ENCODE measurements at regions of chr2 and their contacts with region 1.

Region 1: GRCh38 chr2:235098736-235099494 is 147.1 kb downstream of the SH3BP4 start:
- DNase-seq: no peak
- ATAC-seq: peak; percentile 84
- H3K4me3 ChIP-seq: no peak overlapping the region
- H3K27ac ChIP-seq: peak overlapping the region; percentile 60
- H3K4me1 ChIP-seq: peaks cover 20% of the 10 kb centered on the region
- H3K27me3 ChIP-seq: no peaks in the 10 kb centered on the region
- CTCF ChIP-seq: no peak

Region 2: DNA sequence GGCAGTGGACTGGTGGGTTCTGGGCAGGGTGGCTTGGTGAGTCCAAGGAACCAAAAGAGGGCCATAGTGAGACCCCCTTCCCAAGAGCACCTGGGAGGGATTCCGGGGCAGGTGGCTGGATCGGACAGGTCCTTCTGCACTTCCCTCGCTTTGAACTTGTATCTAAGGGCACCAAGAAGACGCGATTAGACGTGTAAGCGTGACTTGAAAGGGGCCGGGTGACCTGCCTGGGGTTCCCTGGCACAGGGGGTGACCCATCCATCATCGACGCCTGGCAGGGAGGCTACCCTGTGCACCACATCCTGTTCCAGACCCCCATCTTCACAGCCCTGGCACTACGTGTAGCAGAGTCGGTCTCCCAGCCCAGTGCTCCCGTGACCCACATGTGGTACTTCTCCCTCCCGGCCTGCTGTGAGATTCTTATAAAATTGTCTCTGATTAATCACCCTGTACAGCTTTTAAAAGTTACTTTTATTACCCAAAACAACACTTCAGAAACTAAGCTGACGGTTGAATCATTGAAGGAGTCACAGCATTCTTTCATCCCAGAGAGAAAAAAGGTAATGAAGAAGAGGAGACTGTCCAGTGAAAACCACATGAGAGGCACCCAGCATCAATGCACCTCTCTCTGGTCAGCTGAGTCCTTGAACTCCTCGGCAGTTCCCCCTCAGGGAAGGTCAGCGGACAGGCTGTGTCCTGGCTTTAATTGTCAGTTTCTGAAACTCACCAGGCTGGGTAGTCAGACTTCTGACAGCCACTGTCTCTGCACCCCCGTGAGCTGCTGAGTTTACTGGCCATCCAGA is 134.1 kb before region 1 on chr2:
- CTCF ChIA-PET with region 1: no interaction called
- POLR2A ChIA-PET with region 1: no interaction called
- in situ Hi-C with region 1: no loop called
- intact Hi-C with region 1: loop called (anchors 5 kb)
- DNase-seq: no peak
- ATAC-seq: no peak
- H3K4me3 ChIP-seq: peak overlapping the region in 1 of 2 experiments; percentile 8; a peak in 1 of 4 replicates
- H3K27ac ChIP-seq: peak overlapping the region; percentile 100
- H3K4me1 ChIP-seq: peaks cover 93% of the 10 kb centered on the region
- H3K27me3 ChIP-seq: no peaks in the 10 kb centered on the region
- CTCF ChIP-seq: no peak

Region 3: GRCh38 chr2:235024931-235025773 is 73.8 kb before region 1 on chr2:
- CTCF ChIA-PET with region 1: no interaction called
- POLR2A ChIA-PET with region 1: interaction called, 10 read pairs
- in situ Hi-C with region 1: no loop called
- intact Hi-C with region 1: no loop called
- DNase-seq: no peak
- ATAC-seq: no peak
- H3K4me3 ChIP-seq: no peak overlapping the region
- H3K27ac ChIP-seq: peak overlapping the region; percentile 88
- H3K4me1 ChIP-seq: peaks cover 89% of the 10 kb centered on the region
- H3K27me3 ChIP-seq: no peaks in the 10 kb centered on the region
- CTCF ChIP-seq: no peak

Region 4: GRCh38 chr2:235070063-235070706 is 28.7 kb before region 1 on chr2:
- CTCF ChIA-PET with region 1: no interaction called
- POLR2A ChIA-PET with region 1: no interaction called
- in situ Hi-C with region 1: no loop called
- intact Hi-C with region 1: no loop called
- DNase-seq: no peak
- ATAC-seq: no peak
- H3K4me3 ChIP-seq: no peak overlapping the region
- H3K27ac ChIP-seq: no peak overlapping the region
- H3K4me1 ChIP-seq: 0 out of 2 replicates have a peak, but pooled peaks cover 2% of the 10 kb centered on the region
- H3K27me3 ChIP-seq: no peaks in the 10 kb centered on the region
- CTCF ChIP-seq: no peak

Region 5: DNA sequence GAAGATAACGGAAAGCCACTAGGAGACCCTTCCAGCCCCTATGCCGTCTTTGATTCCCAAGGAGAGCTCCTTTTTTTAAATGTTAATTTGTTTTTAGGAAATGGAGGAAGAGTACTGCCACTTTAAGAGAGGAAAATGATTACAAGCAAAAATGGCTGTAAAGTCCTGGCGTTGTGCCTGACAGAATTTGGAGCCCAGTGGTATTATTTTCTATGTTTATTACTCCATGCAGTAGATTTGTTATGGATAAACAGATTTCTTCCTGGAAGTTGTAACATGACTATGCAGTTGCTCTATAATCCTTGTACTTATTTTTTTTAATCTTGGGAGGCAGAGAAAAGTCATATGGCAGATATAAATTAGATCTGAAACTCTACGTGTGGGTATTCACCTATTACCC is 927.9 kb after region 1 on chr2:
- CTCF ChIA-PET with region 1: no interaction called
- POLR2A ChIA-PET with region 1: no interaction called
- in situ Hi-C with region 1: no loop called
- intact Hi-C with region 1: no loop called
- DNase-seq: no peak
- ATAC-seq: no peak
- H3K4me3 ChIP-seq: no peak overlapping the region
- H3K27ac ChIP-seq: no peak overlapping the region
- H3K4me1 ChIP-seq: no peaks in the 10 kb centered on the region
- H3K27me3 ChIP-seq: no peaks in the 10 kb centered on the region
- CTCF ChIP-seq: no peak

Measured in Panc1 (cell line).